Activated T-helper 2 cell treated with anti-CD3 and anti-CD28 coated beads, Interferon-gamma antibody, Interleukin-2, Interleukin-4, amounts not matched to agents 10 μg/mL and 5 μg/mL and 100 μg/mL, durations not matched to agents 14 hours and 24 hours and 36 hours (primary cell): ENCODE measurements at regions of chrX and their contacts with region 1.

Region 1: DNA sequence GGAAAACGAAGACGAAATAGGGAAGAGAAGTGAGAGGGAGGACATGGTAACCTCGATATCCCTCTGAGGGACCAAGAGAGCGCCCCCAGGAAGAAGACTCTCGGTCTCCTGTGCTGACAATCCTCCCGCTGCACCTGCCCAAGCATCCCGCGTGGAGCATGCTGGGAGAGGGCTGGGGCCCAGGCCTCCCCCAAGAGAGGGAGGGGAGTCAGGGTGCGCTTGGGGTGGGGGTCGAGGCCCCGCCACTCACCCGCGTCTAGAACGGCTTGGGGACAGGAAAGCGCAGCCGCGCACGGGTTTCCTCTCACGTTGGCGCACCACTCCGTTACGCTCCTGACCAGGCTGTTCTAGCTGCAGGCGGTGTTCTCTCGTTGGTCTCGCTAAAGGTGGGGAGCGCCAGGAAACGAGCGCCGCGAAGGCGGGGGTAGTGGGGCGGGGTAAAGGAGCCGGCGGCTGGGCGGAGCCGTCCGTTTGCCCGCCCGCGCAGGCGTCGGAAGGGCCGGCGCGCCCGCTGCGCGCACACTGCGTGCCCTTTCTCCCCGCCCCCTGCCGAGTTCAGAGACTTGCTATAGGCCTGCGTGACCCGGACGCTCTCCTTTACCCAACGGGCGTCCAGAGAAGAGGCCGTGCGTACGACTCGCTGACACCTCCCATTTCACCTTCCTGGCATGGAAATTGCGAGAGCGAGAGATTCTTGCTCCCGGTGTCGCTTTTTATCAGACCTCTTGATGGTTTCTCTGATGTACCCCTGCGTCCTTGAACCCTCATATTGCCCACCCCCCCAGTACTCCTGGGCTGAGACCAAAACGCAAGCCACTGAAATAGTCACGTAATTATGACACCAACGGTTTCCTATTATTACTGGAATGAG is at the start of gene C1GALT1C1:
- DNase-seq: peak; percentile 89
- H3K4me3 Mint-ChIP-seq: peak within 1 kb of the TSS; percentile 88
- H3K27ac Mint-ChIP-seq: peak within 1 kb of the TSS; percentile 96
- H3K4me1 Mint-ChIP-seq: peaks cover 21% of the 10 kb centered on the region
- H3K27me3 Mint-ChIP-seq: no peaks in the 10 kb centered on the region
- total RNA-seq, gene C1GALT1C1: 24.5 and 25.0 TPM in 2 replicates

Region 2: GRCh38 chrX:120485638-120486520 is 144.0 kb before region 1 on chrX:
- intact Hi-C with region 1: loop called (anchors 1 kb)
- DNase-seq: peak; percentile 50
- H3K4me3 Mint-ChIP-seq: peak overlapping the region; percentile 72
- H3K27ac Mint-ChIP-seq: peak overlapping the region; percentile 87
- H3K4me1 Mint-ChIP-seq: peaks cover 21% of the 10 kb centered on the region
- H3K27me3 Mint-ChIP-seq: no peaks in the 10 kb centered on the region

Region 3: GRCh38 chrX:120603707-120604360 is 26.1 kb before region 1 on chrX and contains the start of gene MCTS1:
- intact Hi-C with region 1: loop called (anchors 1 kb)
- DNase-seq: peak; percentile 79
- H3K4me3 Mint-ChIP-seq: peak within 1 kb of the TSS; percentile 97
- H3K27ac Mint-ChIP-seq: peak within 1 kb of the TSS; percentile 98
- H3K4me1 Mint-ChIP-seq: peaks cover 9% of the 10 kb centered on the region
- H3K27me3 Mint-ChIP-seq: peaks cover 3% of the 10 kb centered on the region
- total RNA-seq, gene MCTS1: 66.3 and 68.7 TPM in 2 replicates

Region 4: DNA sequence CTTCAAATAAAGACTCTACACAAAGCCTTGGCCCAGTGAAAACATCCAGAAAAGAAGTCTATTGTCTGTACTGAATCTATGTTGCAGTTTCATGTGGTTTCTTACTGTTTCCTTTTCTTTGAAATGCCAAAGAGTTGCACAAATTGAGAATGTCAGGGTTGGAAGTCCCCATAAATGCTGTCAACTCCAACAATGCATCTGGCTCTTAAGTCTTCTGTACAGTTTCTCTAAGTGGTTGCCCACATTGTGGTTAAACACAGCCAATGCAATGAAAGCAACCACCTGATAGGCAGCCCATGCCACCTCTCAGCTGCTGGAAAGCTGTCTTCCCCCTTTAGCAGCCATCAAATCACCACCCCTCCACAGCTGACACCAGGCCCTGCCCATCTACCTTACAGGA is 67.2 kb after region 1 on chrX:
- intact Hi-C with region 1: loop called (anchors 10 kb)
- DNase-seq: peak; percentile 46
- H3K4me3 Mint-ChIP-seq: peak overlapping the region; percentile 24
- H3K27ac Mint-ChIP-seq: peak overlapping the region; percentile 89
- H3K4me1 Mint-ChIP-seq: peaks cover 15% of the 10 kb centered on the region
- H3K27me3 Mint-ChIP-seq: no peaks in the 10 kb centered on the region